PC-9 (cell line): ENCODE measurements at regions of chr13 and their contacts with region 1.

Region 1: DNA sequence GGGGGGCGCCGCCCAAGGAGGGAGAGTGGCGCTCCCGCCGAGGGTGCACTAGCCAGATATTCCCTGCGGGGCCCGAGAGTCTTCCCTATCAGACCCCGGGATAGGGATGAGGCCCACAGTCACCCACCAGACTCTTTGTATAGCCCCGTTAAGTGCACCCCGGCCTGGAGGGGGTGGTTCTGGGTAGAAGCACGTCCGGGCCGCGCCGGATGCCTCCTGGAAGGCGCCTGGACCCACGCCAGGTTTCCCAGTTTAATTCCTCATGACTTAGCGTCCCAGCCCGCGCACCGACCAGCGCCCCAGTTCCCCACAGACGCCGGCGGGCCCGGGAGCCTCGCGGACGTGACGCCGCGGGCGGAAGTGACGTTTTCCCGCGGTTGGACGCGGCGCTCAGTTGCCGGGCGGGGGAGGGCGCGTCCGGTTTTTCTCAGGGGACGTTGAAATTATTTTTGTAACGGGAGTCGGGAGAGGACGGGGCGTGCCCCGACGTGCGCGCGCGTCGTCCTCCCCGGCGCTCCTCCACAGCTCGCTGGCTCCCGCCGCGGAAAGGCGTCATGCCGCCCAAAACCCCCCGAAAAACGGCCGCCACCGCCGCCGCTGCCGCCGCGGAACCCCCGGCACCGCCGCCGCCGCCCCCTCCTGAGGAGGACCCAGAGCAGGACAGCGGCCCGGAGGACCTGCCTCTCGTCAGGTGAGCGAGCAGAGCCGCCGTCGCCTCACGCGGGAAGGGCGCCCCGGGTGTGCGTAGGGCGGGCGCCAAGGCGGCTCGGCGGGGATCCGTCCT is at the start of gene RB1:
- DNase-seq: peak; percentile 72 to 87
- H3K4me3 ChIP-seq: peak within 1 kb of the TSS; percentile 97
- H3K27ac ChIP-seq: peak within 1 kb of the TSS; percentile 93
- H3K4me1 ChIP-seq: peaks cover 18% of the 10 kb centered on the region
- H3K27me3 ChIP-seq: no peaks in the 10 kb centered on the region
- CTCF ChIP-seq: no peak
- total RNA-seq, gene RB1: 19.8 and 23.7 TPM in 2 replicates

Region 2: DNA sequence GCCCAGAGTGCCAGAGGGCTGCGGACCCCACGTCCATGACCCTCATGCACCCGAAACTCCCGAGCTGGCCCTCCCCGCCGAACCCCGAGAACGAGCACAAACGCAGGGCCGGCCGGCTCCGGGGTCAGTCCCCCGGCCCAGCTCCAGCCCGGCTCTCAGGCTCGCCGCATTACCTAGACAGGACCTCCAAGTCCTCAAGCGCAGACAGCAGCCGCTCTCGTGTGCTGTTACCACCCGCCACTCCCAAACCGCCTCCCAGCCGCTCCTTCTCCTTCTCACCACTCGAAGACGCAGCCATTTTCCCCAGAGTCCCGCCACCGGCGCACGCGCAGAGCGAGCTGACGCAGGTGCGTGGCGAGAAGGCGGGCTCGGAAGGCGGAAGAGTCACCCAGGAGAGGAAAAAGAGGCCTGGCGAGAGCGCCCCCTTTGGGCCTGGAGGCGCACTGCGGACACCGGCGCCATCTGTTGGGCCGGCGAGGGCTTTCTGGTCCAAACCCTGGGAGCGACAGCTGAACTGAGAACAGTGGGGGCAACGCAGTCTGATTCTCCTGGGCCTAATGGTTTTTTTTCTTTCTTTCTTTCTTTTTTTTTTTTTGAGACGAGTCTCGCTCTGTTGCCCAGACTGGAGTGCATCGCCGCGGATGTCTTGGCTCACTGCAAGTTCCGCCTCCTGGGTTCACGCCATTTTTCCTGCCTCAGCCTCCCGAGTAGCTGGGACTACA is 208.6 kb before region 1 on chr13 and contains the start of gene MED4:
- CTCF ChIA-PET with region 1: no interaction called
- POLR2A ChIA-PET with region 1: no interaction called
- intact Hi-C with region 1: loop called (anchors 2 kb)
- DNase-seq: peak; percentile 81 to 95
- H3K4me3 ChIP-seq: peak within 1 kb of the TSS; percentile 97
- H3K27ac ChIP-seq: peak within 1 kb of the TSS; percentile 37; the same call in 1 of the 2 replicates
- H3K4me1 ChIP-seq: peaks cover 12% of the 10 kb centered on the region
- H3K27me3 ChIP-seq: no peaks in the 10 kb centered on the region
- CTCF ChIP-seq: peak; percentile 96
- total RNA-seq, gene MED4: 26.9 and 38.5 TPM in 2 replicates

Region 3: GRCh38 chr13:48126944-48127830 is 176.4 kb before region 1 on chr13:
- CTCF ChIA-PET with region 1: no interaction called
- POLR2A ChIA-PET with region 1: no interaction called
- intact Hi-C with region 1: loop called (anchors 2 kb)
- DNase-seq: peak; percentile 21 to 52
- H3K4me3 ChIP-seq: no peak overlapping the region
- H3K27ac ChIP-seq: no peak overlapping the region
- H3K4me1 ChIP-seq: no peaks in the 10 kb centered on the region
- H3K27me3 ChIP-seq: no peaks in the 10 kb centered on the region
- CTCF ChIP-seq: peak; percentile 77

Region 4: DNA sequence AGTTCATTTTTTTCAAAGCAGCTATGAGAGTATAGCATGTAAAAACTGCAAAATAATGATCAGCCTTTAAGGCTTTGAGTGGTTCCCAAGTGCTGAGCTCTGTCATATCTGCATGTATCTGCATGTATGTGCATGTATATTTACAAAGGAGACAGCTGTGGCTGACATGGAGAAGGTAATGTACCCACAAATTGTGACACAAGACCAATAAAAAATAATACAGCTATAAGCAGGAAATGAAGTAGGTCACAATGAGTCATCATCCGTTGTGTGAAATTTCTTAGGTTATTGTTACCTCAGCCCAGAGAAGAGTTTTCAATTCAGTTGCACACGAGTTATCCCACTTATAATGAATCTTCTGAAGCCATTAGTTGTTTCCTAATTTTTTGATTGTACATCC is 147.7 kb before region 1 on chr13:
- CTCF ChIA-PET with region 1: no interaction called
- POLR2A ChIA-PET with region 1: no interaction called
- intact Hi-C with region 1: no loop called
- DNase-seq: peak in 1 of 2 experiments; percentile 71
- H3K4me3 ChIP-seq: no peak overlapping the region
- H3K27ac ChIP-seq: peak overlapping the region; percentile 26
- H3K4me1 ChIP-seq: peaks cover 13% of the 10 kb centered on the region
- H3K27me3 ChIP-seq: no peaks in the 10 kb centered on the region
- CTCF ChIP-seq: no peak

Region 5: DNA sequence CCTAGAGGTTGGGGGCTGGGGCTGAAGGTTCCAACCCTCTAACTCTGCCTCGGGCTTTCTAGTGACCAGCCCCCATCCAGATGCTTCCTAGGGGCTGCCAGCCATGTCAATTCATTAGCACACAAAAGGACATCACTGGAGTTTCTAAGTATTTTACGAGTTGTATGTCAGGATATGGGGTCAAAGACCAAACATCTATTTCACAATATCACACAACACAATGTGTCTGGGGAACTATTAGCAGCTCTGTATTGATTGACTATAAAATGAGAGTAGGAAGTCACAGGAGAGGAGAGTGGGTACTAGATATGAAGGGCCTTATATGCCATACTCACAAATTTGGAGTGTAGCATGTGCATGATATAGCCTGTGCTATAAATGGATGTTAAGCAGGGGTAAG is 67.3 kb after region 1 on chr13:
- CTCF ChIA-PET with region 1: no interaction called
- POLR2A ChIA-PET with region 1: no interaction called
- intact Hi-C with region 1: no loop called
- DNase-seq: no peak
- H3K4me3 ChIP-seq: no peak overlapping the region
- H3K27ac ChIP-seq: no peak overlapping the region
- H3K4me1 ChIP-seq: no peaks in the 10 kb centered on the region
- H3K27me3 ChIP-seq: no peaks in the 10 kb centered on the region
- CTCF ChIP-seq: no peak